ENCODE measurements at regions of chr6 and their contacts with region 1.

Region 1: DNA sequence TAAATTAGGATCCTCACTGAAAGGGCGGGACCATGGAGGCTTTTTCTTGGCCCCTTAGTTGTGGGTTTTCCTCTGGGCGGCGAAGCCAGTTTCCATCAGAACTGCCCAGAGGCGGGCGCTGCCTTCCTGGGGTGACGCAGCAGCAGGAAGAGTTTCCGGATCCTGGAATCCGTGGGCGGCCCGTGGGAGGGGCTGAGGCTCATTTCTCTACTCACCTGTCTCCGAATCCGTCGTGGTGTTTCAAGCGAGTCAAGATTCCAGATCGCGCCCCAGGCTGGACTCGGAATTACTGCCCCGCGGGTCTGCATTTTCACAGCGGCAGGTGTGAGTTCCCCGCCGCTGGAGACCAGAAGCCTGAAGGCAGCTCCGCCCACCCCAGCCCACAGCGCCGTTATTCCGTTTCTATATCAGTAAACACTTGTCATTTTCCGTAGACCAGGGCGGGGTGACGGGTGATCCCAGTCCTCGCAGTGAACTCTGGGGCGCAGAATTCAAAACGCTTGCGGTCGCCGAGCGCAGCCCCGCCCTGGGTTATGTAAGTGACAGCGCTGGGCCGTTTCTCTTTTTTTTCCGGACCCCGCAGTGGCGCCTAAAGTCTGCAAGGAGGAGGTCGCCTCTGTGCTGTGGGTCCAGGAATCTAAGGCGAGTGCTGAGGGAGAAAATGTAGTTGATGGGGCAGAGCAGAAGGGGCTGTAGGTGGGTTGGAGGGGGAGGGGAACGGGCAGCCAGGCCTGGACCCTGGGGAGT is 27.2 kb upstream of the POU5F1 start:
- DNase-seq: peak; percentile 53
- ATAC-seq: peak; percentile 93
- H3K4me3 ChIP-seq: peak overlapping the region; percentile 79 to 86
- H3K27ac ChIP-seq: peak overlapping the region; percentile 88
- H3K4me1 ChIP-seq: peaks cover 4% of the 10 kb centered on the region
- H3K27me3 ChIP-seq: no peaks in the 10 kb centered on the region
- CTCF ChIP-seq: no peak

Region 2: DNA sequence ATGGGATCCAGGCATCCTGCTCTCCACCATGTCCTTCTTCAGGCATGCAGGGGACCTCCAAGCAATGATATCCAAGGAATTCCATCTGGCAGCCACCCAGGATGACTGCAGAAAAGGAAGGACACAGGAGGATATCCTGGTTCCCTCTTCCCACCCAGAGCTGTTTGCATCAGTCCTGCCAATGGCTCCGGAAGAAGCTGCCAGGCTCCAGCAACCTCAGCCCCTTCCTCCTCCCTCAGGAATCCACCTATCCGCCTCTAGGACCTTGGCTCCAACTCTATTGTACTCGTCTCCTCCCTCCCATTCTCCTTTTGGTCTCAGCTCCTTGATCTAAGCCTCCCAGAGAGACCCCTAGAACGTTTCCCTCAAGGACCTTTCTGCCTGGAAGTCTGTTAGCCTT is 58.1 kb before region 1 on chr6:
- CTCF ChIA-PET with region 1: interaction called, 4 read pairs
- POLR2A ChIA-PET with region 1: no interaction called
- in situ Hi-C with region 1: no loop called
- intact Hi-C with region 1: loop called (anchors 1 kb)
- DNase-seq: no peak
- ATAC-seq: no peak
- H3K4me3 ChIP-seq: no peak overlapping the region
- H3K27ac ChIP-seq: no peak overlapping the region
- H3K4me1 ChIP-seq: no peaks in the 10 kb centered on the region
- H3K27me3 ChIP-seq: no peaks in the 10 kb centered on the region
- CTCF ChIP-seq: no peak

Measured in Panc1 (cell line).